HAP-1 (cell line): ENCODE measurements at regions of chr2 and their contacts with region 1.

Region 1: DNA sequence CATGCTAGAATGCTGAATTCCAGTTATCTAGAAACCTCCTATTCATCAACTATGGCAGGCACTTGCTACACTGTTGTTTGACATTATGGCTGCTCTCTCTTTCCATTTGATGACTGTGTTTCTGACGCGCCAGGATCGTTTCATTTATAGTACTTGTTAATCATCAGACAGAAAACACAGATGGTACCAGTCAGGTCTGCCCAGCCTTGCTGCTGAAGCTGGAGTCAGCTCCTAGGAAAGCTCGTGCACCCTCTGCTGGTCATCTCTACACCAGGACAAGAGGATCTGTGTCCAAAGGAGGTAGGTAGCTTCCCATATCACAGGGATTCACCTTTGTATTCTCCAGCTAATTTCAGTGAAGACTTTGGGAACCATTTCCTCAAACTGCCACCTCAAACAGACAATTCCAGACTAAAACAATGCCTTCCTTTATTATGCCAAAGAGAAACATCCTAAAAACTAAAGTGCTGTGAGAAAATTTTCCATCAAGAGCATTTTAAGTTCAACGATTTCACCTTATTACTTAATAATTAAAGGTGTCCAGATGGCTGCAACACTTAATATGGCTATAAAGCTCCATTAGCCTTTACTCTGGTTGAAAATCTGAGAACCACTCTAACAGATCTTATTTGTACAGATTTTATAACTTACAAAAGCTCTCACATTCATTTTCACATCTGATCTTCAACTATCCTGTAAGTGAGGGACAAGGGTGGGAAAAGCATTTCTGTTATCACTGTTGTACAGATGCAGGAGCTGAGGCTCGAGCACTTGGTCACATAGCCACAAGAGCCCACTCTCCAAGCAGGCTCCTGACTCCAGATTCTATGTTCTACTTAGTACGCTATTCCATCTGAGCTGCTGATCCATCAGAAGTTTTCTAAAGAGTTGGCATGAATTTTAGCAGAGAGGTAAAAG is 17.5 kb downstream of the METTL8 start:
- DNase-seq: peak; percentile 77 to 90
- H3K4me3 ChIP-seq: no peak overlapping the region
- H3K4me1 ChIP-seq: peaks cover 3% of the 10 kb centered on the region
- H3K27me3 ChIP-seq: no peaks in the 10 kb centered on the region

Region 2: GRCh38 chr2:170973492-170974303 is 442.6 kb before region 1 on chr2:
- in situ Hi-C with region 1: loop called (anchors 5 kb)
- DNase-seq: peak; percentile 76 to 92
- H3K4me3 ChIP-seq: peak overlapping the region; percentile 44
- H3K4me1 ChIP-seq: peaks cover 10% of the 10 kb centered on the region
- H3K27me3 ChIP-seq: no peaks in the 10 kb centered on the region

Region 3: GRCh38 chr2:171160119-171160955 is 255.9 kb before region 1 on chr2 and contains the start of gene TLK1:
- in situ Hi-C with region 1: loop called (anchors 25 kb)
- DNase-seq: peak; percentile 53 to 76
- H3K4me3 ChIP-seq: peak within 1 kb of the TSS; percentile 83
- H3K4me1 ChIP-seq: peaks cover 39% of the 10 kb centered on the region
- H3K27me3 ChIP-seq: no peaks in the 10 kb centered on the region

Region 4: GRCh38 chr2:171365232-171365631 is 51.0 kb before region 1 on chr2:
- in situ Hi-C with region 1: no loop called
- DNase-seq: no peak
- H3K4me3 ChIP-seq: no peak overlapping the region
- H3K4me1 ChIP-seq: no peaks in the 10 kb centered on the region
- H3K27me3 ChIP-seq: no peaks in the 10 kb centered on the region